Activated CD4-positive, alpha-beta T cell treated with anti-CD3 and anti-CD28 coated beads for 36 hours (primary cell): ENCODE measurements at regions of chr7 and their contacts with region 1.

Region 1: DNA sequence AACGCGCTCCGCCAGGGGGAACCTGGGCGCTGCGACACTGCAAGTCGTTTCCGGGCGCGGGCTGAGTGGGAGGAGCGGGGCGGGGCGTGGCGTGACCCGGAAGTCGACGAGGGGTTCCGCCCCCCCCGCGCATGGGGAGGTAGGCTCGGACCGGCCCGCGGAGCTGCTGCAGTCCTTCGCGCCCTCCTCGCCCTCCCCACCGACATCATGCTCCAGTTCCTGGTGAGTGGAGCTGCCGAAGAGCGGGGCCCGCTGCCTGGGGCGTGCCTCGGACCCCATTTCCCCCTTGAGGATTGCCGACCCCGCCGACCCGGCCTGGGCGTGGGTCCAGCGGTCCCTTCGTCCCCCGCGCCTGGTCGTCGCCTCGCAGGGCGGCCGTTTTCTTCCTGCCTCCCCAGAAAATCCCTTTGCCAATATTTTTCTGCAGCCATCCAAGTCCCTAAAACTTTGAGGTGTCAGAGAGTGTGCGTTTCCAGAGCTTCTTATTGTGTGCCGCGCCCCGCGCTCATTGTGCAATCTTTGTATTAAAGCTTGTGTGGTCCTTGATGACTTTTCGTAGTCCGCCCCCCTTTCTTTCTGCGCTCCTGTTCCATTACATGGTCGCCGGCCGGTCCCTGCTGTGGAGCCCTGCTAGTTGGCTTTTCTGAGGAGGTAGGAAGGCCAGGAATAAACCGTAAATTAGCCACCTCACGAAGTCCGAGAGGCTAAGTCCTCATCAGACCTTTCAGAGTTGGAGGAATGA is at the start of gene STMP1:
- DNase-seq: peak; percentile 99
- ATAC-seq: peak; percentile 82
- H3K4me3 Mint-ChIP-seq: peak within 1 kb of the TSS; percentile 96
- H3K27ac Mint-ChIP-seq: peak within 1 kb of the TSS; percentile 91
- H3K4me1 Mint-ChIP-seq: peaks cover 44% of the 10 kb centered on the region
- H3K27me3 Mint-ChIP-seq: no peaks in the 10 kb centered on the region
- total RNA-seq, gene STMP1: 18.7 to 20.7 TPM

Region 2: DNA sequence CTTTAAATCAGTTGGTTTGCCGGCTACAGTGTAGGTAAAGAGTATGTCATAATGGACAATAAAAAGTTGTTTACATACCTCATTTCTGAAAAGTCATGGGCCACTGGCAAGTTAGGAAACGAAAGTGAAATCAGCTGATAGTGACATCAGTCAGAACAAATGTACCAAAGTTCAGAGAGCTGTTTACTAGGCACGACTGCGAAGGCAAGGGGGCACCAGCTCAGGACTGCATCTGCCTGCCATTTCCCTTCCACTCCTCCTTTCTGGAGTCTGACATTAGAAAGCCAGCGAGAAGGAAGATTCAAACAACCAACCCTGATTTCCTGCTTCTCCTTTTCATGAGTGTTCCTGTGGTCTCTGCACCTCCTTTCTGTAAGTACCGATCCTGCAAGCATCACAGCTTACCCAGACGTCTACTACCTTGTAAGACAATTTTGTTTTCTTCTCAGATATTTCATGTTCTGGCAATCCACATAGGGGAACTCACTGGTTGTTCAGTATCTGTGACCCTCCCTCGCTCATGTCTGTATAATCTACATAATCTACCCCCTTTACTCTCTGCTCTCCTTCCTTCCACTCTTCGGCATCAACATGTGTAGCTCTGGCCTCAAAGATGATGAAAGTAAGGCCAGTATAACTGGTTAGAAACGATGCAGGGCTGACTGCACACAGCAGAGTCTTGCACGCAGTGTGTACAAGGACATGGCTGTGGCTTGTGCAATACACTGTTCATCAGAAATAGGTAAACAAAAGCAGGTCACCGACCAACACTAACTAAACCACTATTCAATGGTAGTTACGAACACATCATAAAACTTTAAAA is 514.4 kb before region 1 on chr7 and contains the start of gene TMEM140:
- CTCF ChIA-PET with region 1: no interaction called
- POLR2A ChIA-PET with region 1: no interaction called
- intact Hi-C with region 1: loop called in 1 of 2 experiments (anchors 2 kb)
- DNase-seq: peak; percentile 75
- ATAC-seq: peak; percentile 81
- H3K4me3 Mint-ChIP-seq: peak within 1 kb of the TSS; percentile 79
- H3K27ac Mint-ChIP-seq: peak within 1 kb of the TSS; percentile 92
- H3K4me1 Mint-ChIP-seq: peaks cover 52% of the 10 kb centered on the region
- H3K27me3 Mint-ChIP-seq: no peaks in the 10 kb centered on the region
- total RNA-seq, gene TMEM140: 10.8 to 12.1 TPM

Region 3: DNA sequence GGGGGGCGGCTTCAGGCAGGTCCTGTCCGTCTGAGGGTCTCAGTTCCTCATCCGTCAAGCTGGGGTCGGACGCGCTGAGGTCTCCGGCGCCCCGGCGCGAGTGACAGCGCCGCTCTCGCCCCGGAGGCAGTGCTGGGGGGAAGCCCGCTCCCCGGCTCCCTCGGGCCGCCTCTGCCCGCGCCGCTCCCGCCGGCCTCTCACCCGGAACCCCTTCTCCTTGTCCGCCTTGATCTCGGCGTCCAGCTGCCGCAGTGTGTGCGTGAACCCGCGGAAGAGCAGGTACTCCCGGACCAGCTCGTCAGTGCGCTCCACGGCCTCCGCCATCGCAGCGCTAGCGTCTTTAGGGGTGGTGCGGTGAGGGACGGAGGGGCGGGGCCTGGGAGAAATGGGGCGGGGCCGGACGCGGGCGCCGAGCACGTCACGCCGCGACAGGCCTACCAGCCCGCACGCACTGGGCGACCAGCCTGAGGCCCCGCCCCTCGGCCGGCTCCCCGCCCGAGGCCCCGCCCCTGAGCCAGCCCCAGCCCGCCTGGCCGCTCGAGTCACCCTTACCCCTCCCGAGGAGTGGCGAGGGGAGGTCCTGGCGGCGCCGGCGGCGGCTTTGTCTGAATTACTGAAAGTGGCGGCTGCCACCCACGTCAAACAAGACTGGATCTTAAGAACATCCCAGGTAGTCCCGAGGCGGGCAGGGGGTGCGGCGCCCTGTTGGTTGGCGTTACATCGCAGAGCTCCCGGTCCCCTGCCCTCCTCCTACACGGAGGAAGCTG is 451.2 kb before region 1 on chr7 and contains the start of gene WDR91:
- CTCF ChIA-PET with region 1: interaction called, 3 read pairs
- POLR2A ChIA-PET with region 1: no interaction called
- intact Hi-C with region 1: loop called in 1 of 2 experiments (anchors 1 kb)
- DNase-seq: peak; percentile 98
- ATAC-seq: peak; percentile 94
- H3K4me3 Mint-ChIP-seq: peak within 1 kb of the TSS; percentile 89
- H3K27ac Mint-ChIP-seq: peak within 1 kb of the TSS; percentile 96
- H3K4me1 Mint-ChIP-seq: peaks cover 39% of the 10 kb centered on the region
- H3K27me3 Mint-ChIP-seq: no peaks in the 10 kb centered on the region
- total RNA-seq, gene WDR91: 11.8 to 12.0 TPM

Region 4: DNA sequence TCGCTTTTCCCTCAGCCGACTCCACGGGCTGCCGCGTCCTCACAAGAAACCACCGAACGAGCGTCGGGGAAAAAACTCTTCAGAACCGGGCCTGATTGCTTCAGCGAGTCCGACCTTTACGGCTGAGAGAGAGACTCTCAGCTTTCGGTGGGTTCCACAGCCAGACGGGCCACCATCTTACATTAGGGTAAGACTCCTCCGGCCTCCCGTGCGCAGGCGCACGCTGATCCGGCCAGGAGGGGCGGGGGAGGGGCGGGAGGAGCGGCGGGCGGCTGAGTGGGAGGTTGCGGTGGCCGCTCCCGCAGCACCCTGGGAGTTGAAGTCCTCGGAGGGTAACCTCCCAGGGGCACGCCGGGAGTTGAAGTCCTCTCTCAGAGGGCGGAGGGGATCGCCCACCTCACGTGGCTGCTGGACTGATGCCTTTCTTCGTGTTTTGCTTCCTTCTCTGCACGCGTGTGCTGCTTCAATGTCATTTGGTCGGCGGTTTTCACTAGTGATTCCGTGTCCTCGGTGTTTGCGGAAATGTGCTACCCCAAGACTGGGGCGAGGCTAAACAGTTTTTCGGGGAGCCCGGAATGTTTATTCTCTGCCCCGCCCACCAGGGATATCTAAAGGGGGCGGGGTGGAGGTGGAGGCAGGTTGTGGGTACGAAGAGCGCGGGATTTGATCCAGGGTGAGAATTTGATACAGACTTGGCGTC is 152.5 kb before region 1 on chr7 and contains the start of gene CNOT4:
- CTCF ChIA-PET with region 1: interaction called, 5 read pairs
- POLR2A ChIA-PET with region 1: no interaction called
- intact Hi-C with region 1: loop called (anchors 1 kb)
- DNase-seq: peak; percentile 98
- ATAC-seq: peak; percentile 94
- H3K4me3 Mint-ChIP-seq: no peak within 1 kb of the TSS
- H3K27ac Mint-ChIP-seq: no peak within 1 kb of the TSS
- H3K4me1 Mint-ChIP-seq: peaks cover 17% of the 10 kb centered on the region
- H3K27me3 Mint-ChIP-seq: no peaks in the 10 kb centered on the region
- total RNA-seq, gene CNOT4: 17.7 to 22.6 TPM

Region 5: DNA sequence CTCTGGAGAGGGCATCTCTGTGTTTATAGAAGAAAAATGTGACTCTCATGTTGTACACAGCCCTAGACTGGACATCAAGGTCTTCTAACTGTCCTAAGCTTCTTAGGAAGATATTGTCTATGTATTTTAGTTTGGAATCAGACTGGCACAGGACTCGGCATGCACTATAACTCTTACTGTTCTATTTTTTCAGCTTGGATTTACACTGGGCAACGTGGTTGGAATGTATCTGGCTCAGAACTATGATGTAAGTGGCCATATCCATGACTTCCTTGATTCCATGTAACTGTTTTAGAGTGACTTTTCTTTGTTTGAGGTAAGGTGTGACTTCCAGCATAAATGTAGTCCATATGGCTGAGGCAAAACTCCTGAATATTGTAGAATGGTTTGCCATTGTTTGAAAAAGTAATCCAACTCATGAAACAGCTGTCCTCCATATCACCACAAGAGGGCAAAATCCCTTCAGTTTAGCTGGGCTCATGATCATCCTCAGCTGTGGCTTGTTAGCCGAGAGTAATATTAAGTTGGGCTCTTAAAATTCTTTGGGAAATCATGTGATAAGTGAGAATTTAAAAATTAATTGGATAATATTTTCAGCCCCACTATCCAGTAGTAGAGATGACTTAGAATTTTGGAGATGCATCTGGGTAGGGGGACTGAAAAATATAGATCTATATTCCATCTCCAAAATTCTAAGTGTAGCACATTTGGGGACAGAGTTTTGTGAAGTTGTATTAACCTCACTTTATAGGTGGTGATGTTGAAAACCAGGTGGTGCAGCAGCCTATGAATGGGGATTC is 10.2 kb after region 1 on chr7:
- CTCF ChIA-PET with region 1: interaction called, 18 read pairs
- POLR2A ChIA-PET with region 1: no interaction called
- intact Hi-C with region 1: no loop called
- DNase-seq: no peak
- ATAC-seq: peak; percentile 47
- H3K4me3 Mint-ChIP-seq: no peak overlapping the region
- H3K27ac Mint-ChIP-seq: no peak overlapping the region
- H3K4me1 Mint-ChIP-seq: peaks cover 20% of the 10 kb centered on the region
- H3K27me3 Mint-ChIP-seq: no peaks in the 10 kb centered on the region

Region 6: GRCh38 chr7:136009488-136010079 is 347.0 kb after region 1 on chr7:
- CTCF ChIA-PET with region 1: no interaction called
- POLR2A ChIA-PET with region 1: no interaction called
- intact Hi-C with region 1: loop called in 1 of 2 experiments (anchors 1 kb)
- DNase-seq: no peak
- ATAC-seq: no peak
- H3K4me3 Mint-ChIP-seq: no peak overlapping the region
- H3K27ac Mint-ChIP-seq: no peak overlapping the region
- H3K4me1 Mint-ChIP-seq: peaks cover 4% of the 10 kb centered on the region
- H3K27me3 Mint-ChIP-seq: peaks cover 8% of the 10 kb centered on the region

Region 7: GRCh38 chr7:136030862-136031318 is 368.3 kb after region 1 on chr7:
- CTCF ChIA-PET with region 1: no interaction called
- POLR2A ChIA-PET with region 1: interaction called, 3 read pairs
- intact Hi-C with region 1: loop called (anchors 1 to 2 kb)
- DNase-seq: peak; percentile 37
- ATAC-seq: peak; percentile 83
- H3K4me3 Mint-ChIP-seq: peak overlapping the region; percentile 3
- H3K27ac Mint-ChIP-seq: peak overlapping the region; percentile 86
- H3K4me1 Mint-ChIP-seq: peaks cover 64% of the 10 kb centered on the region
- H3K27me3 Mint-ChIP-seq: peaks cover 13% of the 10 kb centered on the region